ENCODE measurements at regions of chr20 and their contacts with region 1.

Region 1: DNA sequence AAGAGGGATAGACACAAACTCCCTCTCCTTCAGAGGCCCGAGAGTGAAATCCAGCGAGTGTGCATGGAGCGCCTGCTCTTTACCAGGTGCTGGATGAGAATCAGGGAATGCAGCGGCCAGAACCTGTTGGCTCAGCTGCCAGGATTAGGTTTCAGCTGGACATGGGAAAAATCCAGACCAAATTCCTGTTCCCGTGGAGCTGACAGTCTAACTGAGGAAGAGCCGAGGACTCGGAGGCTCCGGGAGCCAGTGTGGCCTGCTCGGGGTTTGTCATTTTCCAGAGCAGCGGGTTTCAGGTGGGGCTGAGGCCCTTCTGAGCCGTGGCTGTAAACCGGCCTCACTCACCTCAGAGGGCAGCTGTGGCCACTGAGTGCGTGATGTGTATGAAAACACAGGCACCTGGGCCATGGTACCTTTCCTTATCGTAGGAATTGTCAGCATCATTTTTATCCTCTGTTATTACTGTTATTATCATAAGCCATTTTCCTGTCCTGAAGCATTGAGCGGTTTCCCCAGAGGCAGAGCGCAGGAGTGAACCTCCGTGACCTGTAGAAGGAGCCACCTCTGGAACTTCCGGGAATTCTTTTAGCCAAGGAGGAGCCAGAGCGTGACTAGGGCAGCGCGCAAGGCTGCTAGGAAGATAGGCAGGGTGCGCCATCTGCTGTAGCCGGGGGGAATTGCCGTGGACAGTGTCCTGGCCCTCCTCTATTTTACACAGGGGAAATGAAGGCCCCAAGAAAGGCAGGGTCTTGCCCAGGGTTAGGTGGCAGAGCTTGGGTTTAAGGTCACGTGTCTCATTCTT is 27.3 kb downstream of the PKIG start:
- DNase-seq: peak; percentile 97
- H3K27ac ChIP-seq: peak overlapping the region; percentile 64
- CTCF ChIP-seq: peak; percentile 100

Region 2: DNA sequence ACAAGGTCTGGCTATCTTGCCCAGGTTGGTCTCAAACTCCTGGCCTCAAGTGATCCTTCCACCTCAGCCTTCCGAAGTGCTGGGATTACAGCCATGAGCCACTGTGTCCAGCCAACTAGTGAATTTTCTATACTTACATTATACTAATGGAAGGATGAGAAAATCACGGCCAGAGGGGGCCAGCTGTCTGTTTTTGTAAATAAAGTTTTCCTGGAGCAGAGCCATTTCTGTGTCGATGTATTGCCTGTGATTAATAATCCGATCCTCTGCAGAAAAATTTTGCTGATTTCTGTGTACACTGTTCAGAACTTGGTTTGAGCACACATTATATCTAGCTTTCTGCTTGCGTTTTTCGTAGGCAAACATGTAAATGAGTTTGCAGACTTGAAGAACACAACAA is 1448.8 kb before region 1 on chr20:
- CTCF ChIA-PET with region 1: no interaction called
- POLR2A ChIA-PET with region 1: no interaction called
- DNase-seq: no peak
- H3K27ac ChIP-seq: no peak overlapping the region
- CTCF ChIP-seq: no peak

Region 3: GRCh38 chr20:44598423-44599305 is 11.0 kb before region 1 on chr20:
- CTCF ChIA-PET with region 1: interaction called, 25 read pairs
- POLR2A ChIA-PET with region 1: no interaction called
- DNase-seq: no peak
- H3K27ac ChIP-seq: no peak overlapping the region
- CTCF ChIP-seq: no peak

Region 4: GRCh38 chr20:44641325-44641724 is 31.6 kb after region 1 on chr20:
- CTCF ChIA-PET with region 1: no interaction called
- POLR2A ChIA-PET with region 1: no interaction called
- DNase-seq: no peak
- H3K27ac ChIP-seq: peak overlapping the region; percentile 93
- CTCF ChIP-seq: no peak

Region 5: DNA sequence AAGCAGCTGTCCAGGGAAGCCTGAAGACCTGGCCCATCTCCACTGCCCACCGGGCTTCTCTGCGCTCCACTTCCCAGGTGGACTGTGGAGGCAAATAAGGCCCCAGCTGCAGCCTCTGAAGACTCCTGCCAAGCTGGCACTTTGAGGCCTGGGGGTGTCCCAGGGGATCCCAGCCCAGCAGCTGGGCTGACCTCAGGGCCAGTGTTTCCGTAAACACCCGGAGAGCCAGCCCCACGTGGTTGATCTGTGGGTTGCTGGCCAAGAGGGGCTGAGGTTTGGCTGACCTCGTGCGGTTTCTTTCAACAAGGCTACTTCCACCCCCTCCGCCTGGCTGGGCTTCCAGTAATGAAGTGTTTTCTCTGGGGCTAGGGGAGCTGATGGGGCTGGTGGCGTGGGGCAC is 93.1 kb after region 1 on chr20:
- CTCF ChIA-PET with region 1: no interaction called
- POLR2A ChIA-PET with region 1: no interaction called
- DNase-seq: no peak
- H3K27ac ChIP-seq: no peak overlapping the region
- CTCF ChIP-seq: no peak